ENCODE measurements at regions of chr3 and their contacts with region 1.

Region 1: DNA sequence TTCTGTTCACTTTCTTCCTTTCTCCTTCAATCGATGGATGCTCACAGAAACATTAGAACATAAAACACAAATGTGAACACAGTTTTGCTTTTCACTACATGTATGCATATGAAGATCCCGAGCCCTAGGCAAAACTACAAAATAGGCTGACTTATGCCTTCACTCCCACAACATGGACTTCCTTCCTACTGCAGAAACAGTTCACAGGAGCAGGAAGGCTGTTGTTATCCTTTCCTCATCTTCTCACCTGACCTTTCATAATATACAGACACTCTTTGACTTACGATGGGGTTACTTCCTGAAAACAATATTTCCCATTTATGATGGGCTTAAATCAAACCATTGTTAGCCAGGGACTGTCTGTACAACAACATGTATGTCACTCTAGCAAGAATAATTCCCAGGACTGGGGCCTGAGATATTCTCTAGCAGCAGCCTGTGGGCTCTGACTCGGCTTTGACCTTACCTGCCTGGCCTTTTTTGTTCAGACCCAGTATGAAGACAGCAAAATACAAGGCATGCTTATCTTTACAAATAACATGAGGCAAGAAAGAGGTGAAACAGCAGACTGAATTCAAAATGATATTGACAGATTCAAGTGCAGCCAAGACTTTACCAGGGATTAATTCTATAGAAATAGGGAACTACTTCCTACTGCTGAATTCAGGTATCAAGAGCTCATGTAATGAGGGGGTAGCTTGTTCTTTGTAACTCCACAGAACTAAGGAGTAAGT is 51.8 kb upstream of the PLXND1 start:
- DNase-seq: no peak
- ATAC-seq: no peak
- H3K4me3 ChIP-seq: no peak overlapping the region
- H3K4me3 Mint-ChIP-seq: no peak overlapping the region
- H3K27ac ChIP-seq: no peak overlapping the region
- H3K27ac Mint-ChIP-seq: peak overlapping the region in 1 of 2 donors; percentile 4
- H3K4me1 ChIP-seq: no peaks in the 10 kb centered on the region
- H3K4me1 Mint-ChIP-seq: peaks cover 13 to 31% (median 13%) of the 10 kb centered on the region in 3 donors
- H3K27me3 ChIP-seq: no peaks in the 10 kb centered on the region
- H3K27me3 Mint-ChIP-seq: no peaks in the 10 kb centered on the region

Region 2: GRCh38 chr3:129369028-129369427 is 289.2 kb before region 1 on chr3:
- CTCF ChIA-PET with region 1: interaction called in 1 of 2 experiments, 10 read pairs
- POLR2A ChIA-PET with region 1: no interaction called
- DNase-seq: no peak
- ATAC-seq: no peak
- H3K4me3 ChIP-seq: no peak overlapping the region
- H3K4me3 Mint-ChIP-seq: no peak overlapping the region
- H3K27ac ChIP-seq: no peak overlapping the region
- H3K27ac Mint-ChIP-seq: no peak overlapping the region
- H3K4me1 ChIP-seq: no peaks in the 10 kb centered on the region
- H3K4me1 Mint-ChIP-seq: no peaks in the 10 kb centered on the region
- H3K27me3 ChIP-seq: no peaks in the 10 kb centered on the region
- H3K27me3 Mint-ChIP-seq: no peaks in the 10 kb centered on the region

Region 3: GRCh38 chr3:129560901-129561594 is 97.2 kb before region 1 on chr3:
- CTCF ChIA-PET with region 1: no interaction called
- POLR2A ChIA-PET with region 1: no interaction called
- DNase-seq: no peak
- ATAC-seq: no peak
- H3K4me3 ChIP-seq: no peak overlapping the region
- H3K4me3 Mint-ChIP-seq: no peak overlapping the region
- H3K27ac ChIP-seq: no peak overlapping the region
- H3K27ac Mint-ChIP-seq: peak overlapping the region in 1 of 2 donors; percentile 1
- H3K4me1 ChIP-seq: peaks cover 0 to 25% of the 10 kb centered on the region in 2 experiments
- H3K4me1 Mint-ChIP-seq: peaks cover 6 to 15% (median 7%) of the 10 kb centered on the region in 3 donors
- H3K27me3 ChIP-seq: peaks cover 0 to 4% of the 10 kb centered on the region in 2 experiments
- H3K27me3 Mint-ChIP-seq: peaks cover 0 to 2% of the 10 kb centered on the region in 2 donors

Region 4: GRCh38 chr3:129673882-129674797 is 15.9 kb after region 1 on chr3:
- CTCF ChIA-PET with region 1: no interaction called
- POLR2A ChIA-PET with region 1: interaction called in 1 of 2 experiments, 11 read pairs
- DNase-seq: no peak
- ATAC-seq: no peak
- H3K4me3 ChIP-seq: no peak overlapping the region
- H3K4me3 Mint-ChIP-seq: no peak overlapping the region
- H3K27ac ChIP-seq: no peak overlapping the region
- H3K27ac Mint-ChIP-seq: no peak overlapping the region
- H3K4me1 ChIP-seq: no peaks in the 10 kb centered on the region
- H3K4me1 Mint-ChIP-seq: peaks cover 5 to 8% (median 6%) of the 10 kb centered on the region in 3 donors
- H3K27me3 ChIP-seq: no peaks in the 10 kb centered on the region
- H3K27me3 Mint-ChIP-seq: no peaks in the 10 kb centered on the region

Region 5: GRCh38 chr3:129686941-129687340 is 28.7 kb after region 1 on chr3:
- CTCF ChIA-PET with region 1: no interaction called
- POLR2A ChIA-PET with region 1: no interaction called
- DNase-seq: no peak
- ATAC-seq: no peak
- H3K4me3 ChIP-seq: no peak overlapping the region
- H3K4me3 Mint-ChIP-seq: no peak overlapping the region
- H3K27ac ChIP-seq: no peak overlapping the region
- H3K27ac Mint-ChIP-seq: no peak overlapping the region
- H3K4me1 ChIP-seq: no peaks in the 10 kb centered on the region
- H3K4me1 Mint-ChIP-seq: peaks cover 10 to 30% (median 10%) of the 10 kb centered on the region in 3 donors
- H3K27me3 ChIP-seq: no peaks in the 10 kb centered on the region
- H3K27me3 Mint-ChIP-seq: no peaks in the 10 kb centered on the region

Region 6: GRCh38 chr3:129865806-129866205 is 207.5 kb after region 1 on chr3:
- CTCF ChIA-PET with region 1: no interaction called
- POLR2A ChIA-PET with region 1: interaction called in 1 of 2 experiments, 12 read pairs
- DNase-seq: no peak
- ATAC-seq: no peak
- H3K4me3 ChIP-seq: no peak overlapping the region
- H3K4me3 Mint-ChIP-seq: no peak overlapping the region
- H3K27ac ChIP-seq: no peak overlapping the region
- H3K27ac Mint-ChIP-seq: no peak overlapping the region
- H3K4me1 ChIP-seq: no peaks in the 10 kb centered on the region
- H3K4me1 Mint-ChIP-seq: peaks cover 39 to 43% (median 40%) of the 10 kb centered on the region in 3 donors
- H3K27me3 ChIP-seq: no peaks in the 10 kb centered on the region
- H3K27me3 Mint-ChIP-seq: no peaks in the 10 kb centered on the region